Activated naive CD4-positive, alpha-beta T cell treated with anti-CD3 and anti-CD28 coated beads for 36 hours (primary cell): ENCODE measurements at regions of chr13 and their contacts with region 1.

Region 1: GRCh38 chr13:28540612-28541011 is 45.7 kb upstream of the FLT1 start:
- DNase-seq: peak; percentile 27
- H3K4me3 Mint-ChIP-seq: no peak overlapping the region
- H3K27ac Mint-ChIP-seq: peak overlapping the region; percentile 82
- H3K4me1 Mint-ChIP-seq: peaks cover 23% of the 10 kb centered on the region
- H3K27me3 Mint-ChIP-seq: peaks cover 5% of the 10 kb centered on the region

Region 2: GRCh38 chr13:28574617-28575142 is 34.1 kb after region 1 on chr13:
- CTCF ChIA-PET with region 1: interaction called, 3 read pairs
- intact Hi-C with region 1: loop called (anchors 1 kb)
- DNase-seq: peak; percentile 65
- H3K4me3 Mint-ChIP-seq: no peak overlapping the region
- H3K27ac Mint-ChIP-seq: peak overlapping the region; percentile 77
- H3K4me1 Mint-ChIP-seq: peaks cover 11% of the 10 kb centered on the region
- H3K27me3 Mint-ChIP-seq: no peaks in the 10 kb centered on the region

Region 3: GRCh38 chr13:28641605-28641937 is 101.0 kb after region 1 on chr13:
- CTCF ChIA-PET with region 1: no interaction called
- intact Hi-C with region 1: no loop called
- DNase-seq: no peak
- H3K4me3 Mint-ChIP-seq: no peak overlapping the region
- H3K27ac Mint-ChIP-seq: no peak overlapping the region
- H3K4me1 Mint-ChIP-seq: peaks cover 7% of the 10 kb centered on the region
- H3K27me3 Mint-ChIP-seq: peaks cover 10% of the 10 kb centered on the region

Region 4: GRCh38 chr13:28718543-28719226 is 178.1 kb after region 1 on chr13 and contains the start of gene SLC46A3:
- CTCF ChIA-PET with region 1: no interaction called
- intact Hi-C with region 1: no loop called
- DNase-seq: peak; percentile 98
- H3K4me3 Mint-ChIP-seq: peak within 1 kb of the TSS; percentile 94
- H3K27ac Mint-ChIP-seq: peak within 1 kb of the TSS; percentile 86
- H3K4me1 Mint-ChIP-seq: peaks cover 22% of the 10 kb centered on the region
- H3K27me3 Mint-ChIP-seq: no peaks in the 10 kb centered on the region
- total RNA-seq, gene SLC46A3: 2.2 to 3.2 TPM